Activated naive CD4-positive, alpha-beta T cell treated with anti-CD3 and anti-CD28 coated beads for 36 hours (primary cell): ENCODE measurements at regions of chr7 and their contacts with region 1.

Region 1: DNA sequence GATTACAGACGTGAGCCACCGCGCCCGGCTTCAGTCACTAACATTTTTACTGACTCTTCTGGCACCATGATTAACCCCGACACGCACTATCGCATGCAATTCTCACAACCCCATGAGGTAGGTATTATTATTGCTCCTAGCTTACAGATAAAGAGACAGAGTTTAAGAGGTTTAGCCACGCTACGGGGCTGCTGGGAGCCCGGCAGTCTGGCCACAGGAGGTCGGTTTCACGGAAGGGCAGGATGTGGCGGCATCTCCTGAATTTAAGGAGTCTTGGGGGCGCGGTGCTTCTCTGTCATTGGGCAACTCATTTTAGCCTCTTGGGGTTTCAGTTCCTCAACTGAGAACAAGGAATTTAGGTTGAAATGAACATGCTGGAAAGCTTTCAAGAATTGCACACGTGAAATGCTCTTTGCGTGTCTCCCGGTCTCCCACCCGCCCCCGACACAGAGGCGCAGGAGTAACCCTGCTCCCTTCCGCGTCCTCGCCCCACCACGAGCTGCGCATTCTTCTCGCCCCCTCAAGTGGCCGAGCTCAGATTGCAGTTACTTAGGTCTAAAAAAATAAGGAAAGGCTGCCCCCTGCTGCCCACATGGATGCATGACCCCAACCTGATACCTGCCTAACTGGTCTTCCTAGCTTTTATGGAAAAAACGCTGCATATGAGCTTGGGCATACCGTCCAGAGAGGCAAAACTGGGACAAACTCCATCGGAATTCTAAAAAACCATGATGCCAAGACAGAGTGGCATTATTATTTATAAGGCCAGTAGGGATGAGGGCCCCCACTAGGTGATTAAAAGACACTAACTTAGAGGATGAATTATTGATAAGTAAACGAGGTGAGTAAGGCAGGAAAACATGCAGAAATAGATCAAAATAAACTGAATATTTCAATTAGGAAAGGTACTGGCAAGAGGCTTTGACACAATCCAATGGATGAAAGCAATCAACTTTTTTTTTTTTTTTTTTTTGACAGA is 12.4 kb downstream of the PRSS2 start:
- DNase-seq: peak; percentile 86
- H3K4me3 Mint-ChIP-seq: peak overlapping the region; percentile 72
- H3K27ac Mint-ChIP-seq: peak overlapping the region; percentile 99
- H3K4me1 Mint-ChIP-seq: peaks cover 8% of the 10 kb centered on the region
- H3K27me3 Mint-ChIP-seq: no peaks in the 10 kb centered on the region

Region 2: GRCh38 chr7:142587578-142588191 is 195.5 kb before region 1 on chr7:
- CTCF ChIA-PET with region 1: interaction called, 3 read pairs
- intact Hi-C with region 1: loop called (anchors 1 kb)
- DNase-seq: no peak
- H3K4me3 Mint-ChIP-seq: peak overlapping the region; percentile 44
- H3K27ac Mint-ChIP-seq: peak overlapping the region; percentile 70
- H3K4me1 Mint-ChIP-seq: peaks cover 12% of the 10 kb centered on the region
- H3K27me3 Mint-ChIP-seq: no peaks in the 10 kb centered on the region

Region 3: DNA sequence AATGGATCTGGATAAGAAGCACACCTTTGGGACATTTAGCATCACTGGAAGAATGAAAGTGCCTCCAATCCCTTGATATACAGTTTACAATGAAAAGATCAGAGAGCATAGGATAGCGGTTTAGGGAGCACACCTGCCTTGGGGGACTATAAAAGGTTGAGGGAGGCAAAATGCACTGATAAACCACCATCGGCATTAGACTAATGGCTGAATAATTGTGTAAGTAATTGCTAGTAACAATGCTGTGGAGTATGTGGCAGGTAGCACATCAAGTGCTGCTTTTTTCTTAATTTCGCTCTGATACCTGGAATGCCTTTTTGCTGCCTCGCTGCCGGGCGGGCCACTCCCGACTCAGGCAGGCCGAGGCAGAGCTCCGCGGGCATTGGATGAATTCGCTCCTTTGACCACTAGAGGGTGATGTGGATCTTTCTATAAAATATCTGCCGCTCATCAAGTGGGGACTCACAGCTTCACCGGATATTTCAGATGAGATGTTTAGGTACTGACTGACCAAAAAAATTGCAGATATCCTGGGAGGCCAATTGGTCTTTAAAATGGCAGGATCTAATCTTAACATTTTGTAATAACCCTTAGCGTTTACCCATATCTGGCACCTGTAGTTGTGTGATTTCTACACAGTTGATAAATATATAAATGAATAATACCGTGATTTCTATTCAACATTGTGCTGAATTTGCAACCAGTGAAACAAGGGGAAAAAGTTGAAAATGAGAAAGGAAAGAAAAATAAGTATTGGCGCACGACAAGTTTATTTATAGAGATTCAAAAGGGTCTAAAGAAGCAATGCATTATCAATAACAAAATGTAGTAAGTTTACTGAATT is 150.7 kb before region 1 on chr7:
- CTCF ChIA-PET with region 1: interaction called, 35 read pairs
- intact Hi-C with region 1: loop called (anchors 1 kb)
- DNase-seq: peak; percentile 66
- H3K4me3 Mint-ChIP-seq: no peak overlapping the region
- H3K27ac Mint-ChIP-seq: no peak overlapping the region
- H3K4me1 Mint-ChIP-seq: peaks cover 11% of the 10 kb centered on the region
- H3K27me3 Mint-ChIP-seq: no peaks in the 10 kb centered on the region

Region 4: GRCh38 chr7:142689439-142690120 is 93.6 kb before region 1 on chr7:
- CTCF ChIA-PET with region 1: interaction called, 3 read pairs
- intact Hi-C with region 1: loop called (anchors 1 kb)
- DNase-seq: no peak
- H3K4me3 Mint-ChIP-seq: no peak overlapping the region
- H3K27ac Mint-ChIP-seq: no peak overlapping the region
- H3K4me1 Mint-ChIP-seq: peaks cover 20% of the 10 kb centered on the region
- H3K27me3 Mint-ChIP-seq: no peaks in the 10 kb centered on the region

Region 5: DNA sequence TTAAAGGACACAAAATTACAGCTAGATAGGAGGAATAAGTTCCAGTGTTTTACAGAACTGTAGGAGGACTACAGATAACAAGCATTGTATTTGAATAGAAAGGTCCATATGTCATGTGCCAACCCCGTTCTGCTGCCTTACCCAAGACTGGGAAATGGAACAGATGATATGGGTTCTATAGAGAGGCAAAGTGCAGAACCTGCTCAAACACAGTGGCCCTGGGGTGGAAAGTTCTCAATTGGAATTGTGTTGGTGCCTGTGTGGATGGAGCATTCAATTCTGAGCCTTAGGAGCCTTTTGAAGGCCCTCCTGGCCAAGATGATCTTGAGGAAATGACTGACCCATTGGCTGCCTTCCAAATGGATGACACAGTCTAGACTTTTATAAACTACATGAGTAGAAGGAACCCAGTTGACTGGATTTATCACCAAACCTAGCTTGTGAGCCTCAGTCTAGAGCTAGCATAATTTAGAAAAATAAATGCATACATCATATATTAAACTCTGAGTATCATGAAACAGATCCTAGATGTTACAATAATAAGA is 38.0 kb before region 1 on chr7:
- CTCF ChIA-PET with region 1: no interaction called
- intact Hi-C with region 1: no loop called
- DNase-seq: no peak
- H3K4me3 Mint-ChIP-seq: no peak overlapping the region
- H3K27ac Mint-ChIP-seq: no peak overlapping the region
- H3K4me1 Mint-ChIP-seq: peaks cover under 1% of the 10 kb centered on the region
- H3K27me3 Mint-ChIP-seq: no peaks in the 10 kb centered on the region

Region 6: GRCh38 chr7:142796608-142797385 is 13.6 kb after region 1 on chr7:
- CTCF ChIA-PET with region 1: interaction called, 33 read pairs
- intact Hi-C with region 1: loop called (anchors 1 kb)
- DNase-seq: no peak
- H3K4me3 Mint-ChIP-seq: peak overlapping the region; percentile 88
- H3K27ac Mint-ChIP-seq: peak overlapping the region; percentile 99
- H3K4me1 Mint-ChIP-seq: peaks cover 60% of the 10 kb centered on the region
- H3K27me3 Mint-ChIP-seq: no peaks in the 10 kb centered on the region